Naive thymus-derived CD4-positive, alpha-beta T cell (primary cell): ENCODE measurements at regions of chr2 and their contacts with region 1.

Region 1: DNA sequence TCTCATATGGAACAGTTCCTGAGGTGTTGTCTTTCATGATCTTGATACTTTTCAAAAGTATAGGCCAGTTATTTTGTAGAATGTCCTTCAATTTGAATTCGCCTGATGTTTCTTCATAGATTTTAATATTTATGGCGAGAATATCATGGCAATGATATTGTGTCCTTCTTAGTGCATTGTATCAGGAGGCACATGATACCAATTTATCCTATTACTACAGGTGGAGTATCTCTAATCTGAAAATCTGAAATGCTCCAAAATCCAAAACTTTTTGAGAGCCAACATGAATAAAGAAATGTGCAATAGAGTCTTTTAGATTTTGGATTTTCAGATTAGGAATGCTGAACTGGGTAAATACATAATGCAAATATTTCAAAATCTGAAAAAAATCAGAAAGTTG is 216.6 kb upstream of the LYPD1 start:
- DNase-seq: no peak
- ATAC-seq: no peak
- H3K4me3 ChIP-seq: no peak overlapping the region
- H3K4me3 Mint-ChIP-seq: no peak overlapping the region
- H3K27ac ChIP-seq: no peak overlapping the region
- H3K27ac Mint-ChIP-seq: no peak overlapping the region
- H3K4me1 ChIP-seq: no peaks in the 10 kb centered on the region
- H3K4me1 Mint-ChIP-seq: no peaks in the 10 kb centered on the region
- H3K27me3 ChIP-seq: no peaks in the 10 kb centered on the region
- H3K27me3 Mint-ChIP-seq: peaks cover 0 to 4% (median 3%) of the 10 kb centered on the region in 5 donors

Region 2: DNA sequence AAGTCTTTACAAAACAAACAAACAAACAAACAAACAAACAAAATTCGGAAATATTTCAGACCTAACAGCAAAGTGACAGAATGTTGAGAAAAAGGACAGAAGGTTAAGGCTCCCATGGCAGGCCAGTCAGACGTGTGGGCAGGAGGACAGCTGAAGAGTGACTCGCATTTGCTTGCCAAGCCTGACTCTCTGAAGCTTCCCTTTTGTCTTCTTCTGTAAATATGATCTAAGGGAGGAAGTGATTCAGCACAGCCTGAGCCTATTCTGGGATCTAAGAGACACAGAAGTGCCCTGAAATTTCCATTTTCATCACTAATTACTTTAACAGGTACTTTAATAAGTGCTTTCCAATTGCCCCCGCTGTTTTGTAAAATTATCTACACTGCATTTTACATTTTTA is 82.5 kb before region 1 on chr2:
- CTCF ChIA-PET with region 1: no interaction called
- POLR2A ChIA-PET with region 1: no interaction called
- intact Hi-C with region 1: no loop called
- DNase-seq: no peak
- ATAC-seq: no peak
- H3K4me3 ChIP-seq: no peak overlapping the region
- H3K4me3 Mint-ChIP-seq: no peak overlapping the region
- H3K27ac ChIP-seq: no peak overlapping the region
- H3K27ac Mint-ChIP-seq: no peak overlapping the region
- H3K4me1 ChIP-seq: no peaks in the 10 kb centered on the region
- H3K4me1 Mint-ChIP-seq: no peaks in the 10 kb centered on the region
- H3K27me3 ChIP-seq: no peaks in the 10 kb centered on the region
- H3K27me3 Mint-ChIP-seq: no peaks in the 10 kb centered on the region

Region 3: DNA sequence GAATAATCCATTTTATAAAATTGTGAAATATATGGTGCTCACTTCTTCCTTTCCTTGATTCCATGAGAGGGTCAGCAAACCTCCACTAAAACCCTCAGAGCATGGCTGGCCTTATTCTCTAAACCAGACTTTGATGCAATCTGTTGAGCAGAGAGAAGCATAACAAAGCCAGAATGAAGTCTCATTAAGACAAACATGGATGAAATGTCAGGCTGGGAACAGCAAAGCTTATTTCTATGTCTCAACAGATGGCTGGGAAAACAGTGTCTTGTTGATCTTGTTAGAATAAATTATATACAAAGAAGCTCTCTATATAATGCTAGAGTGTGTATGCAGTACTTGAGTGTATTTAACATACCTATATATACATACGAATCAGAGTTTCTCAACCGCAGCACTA is 10.5 kb after region 1 on chr2:
- CTCF ChIA-PET with region 1: no interaction called
- POLR2A ChIA-PET with region 1: no interaction called
- intact Hi-C with region 1: no loop called
- DNase-seq: no peak
- ATAC-seq: no peak
- H3K4me3 ChIP-seq: no peak overlapping the region
- H3K4me3 Mint-ChIP-seq: no peak overlapping the region
- H3K27ac ChIP-seq: no peak overlapping the region
- H3K27ac Mint-ChIP-seq: no peak overlapping the region
- H3K4me1 ChIP-seq: no peaks in the 10 kb centered on the region
- H3K4me1 Mint-ChIP-seq: peaks cover 0 to 9% (median 0%) of the 10 kb centered on the region in 7 donors
- H3K27me3 ChIP-seq: no peaks in the 10 kb centered on the region
- H3K27me3 Mint-ChIP-seq: no peaks in the 10 kb centered on the region

Region 4: DNA sequence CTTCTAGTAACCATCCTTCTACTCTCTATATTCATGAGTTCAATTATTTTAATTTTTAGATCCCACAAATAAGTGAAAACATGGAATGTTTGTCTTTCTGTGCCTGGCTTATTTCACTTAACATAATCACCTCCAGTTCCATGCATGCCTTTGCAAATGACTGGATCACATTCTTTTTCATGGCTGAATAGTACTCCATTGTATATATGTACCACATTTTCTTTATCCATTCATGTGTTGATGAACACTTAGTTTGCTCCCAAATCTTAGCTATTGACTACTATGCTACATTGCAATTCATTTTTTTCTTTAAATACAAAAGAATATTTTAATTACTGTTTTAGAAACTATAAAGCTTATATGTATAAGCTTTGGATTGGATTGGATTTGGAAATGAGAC is 23.9 kb after region 1 on chr2:
- CTCF ChIA-PET with region 1: no interaction called
- POLR2A ChIA-PET with region 1: no interaction called
- intact Hi-C with region 1: loop called in 1 of 2 experiments (anchors 1 kb)
- DNase-seq: no peak
- ATAC-seq: no peak
- H3K4me3 ChIP-seq: no peak overlapping the region
- H3K4me3 Mint-ChIP-seq: no peak overlapping the region
- H3K27ac ChIP-seq: no peak overlapping the region
- H3K27ac Mint-ChIP-seq: no peak overlapping the region
- H3K4me1 ChIP-seq: no peaks in the 10 kb centered on the region
- H3K4me1 Mint-ChIP-seq: no peaks in the 10 kb centered on the region
- H3K27me3 ChIP-seq: no peaks in the 10 kb centered on the region
- H3K27me3 Mint-ChIP-seq: peaks cover 0 to 4% (median 0%) of the 10 kb centered on the region in 5 donors